ENCODE measurements at regions of chr20 and their contacts with region 1.

Region 1: GRCh38 chr20:57587275-57587988 is 26.5 kb downstream of the PCK1 start:
- DNase-seq: no peak
- ATAC-seq: no peak

Region 2: DNA sequence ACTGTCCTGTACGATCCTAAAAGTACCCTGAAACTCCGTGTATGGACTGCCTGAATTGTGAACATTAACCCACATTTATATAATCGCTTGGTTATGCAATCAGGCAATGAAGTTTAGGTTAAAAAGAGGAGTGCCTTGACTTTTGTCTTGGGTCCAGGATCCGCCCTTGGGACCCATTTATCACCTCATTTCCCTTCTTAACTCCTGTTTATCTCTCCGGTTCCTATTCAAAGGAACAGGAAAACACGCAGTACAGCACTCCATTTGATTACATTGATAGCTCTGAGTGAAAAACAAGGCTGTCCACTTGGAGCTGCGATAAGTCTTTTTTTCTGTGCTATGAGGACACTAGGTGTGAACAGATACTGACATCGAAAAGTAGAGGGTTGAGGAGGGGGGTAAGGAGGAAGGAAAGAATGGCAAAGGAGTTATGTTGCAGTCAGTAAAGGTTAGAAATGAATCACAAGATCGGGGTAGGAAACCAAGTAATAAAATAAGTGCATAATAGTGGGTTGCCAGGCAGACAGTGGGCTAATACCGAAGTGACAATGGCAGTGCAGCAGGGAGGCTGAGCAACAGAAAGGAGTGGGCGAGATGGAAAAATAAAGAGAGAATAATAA is 42.5 kb before region 1 on chr20:
- intact Hi-C with region 1: no loop called
- DNase-seq: no peak
- ATAC-seq: peak; percentile 52

Region 3: GRCh38 chr20:57555457-57556184 is 31.8 kb before region 1 on chr20:
- intact Hi-C with region 1: loop called (anchors 1 kb)
- DNase-seq: no peak
- ATAC-seq: no peak

Region 4: GRCh38 chr20:57570145-57570850 is 17.1 kb before region 1 on chr20:
- intact Hi-C with region 1: no loop called
- DNase-seq: no peak
- ATAC-seq: peak; percentile 71

Measured in sciatic nerve (tissue), 2 donors.